ENCODE measurements at regions of chr4 and their contacts with region 1.

Region 1: GRCh38 chr4:173538148-173538908 is 8.3 kb upstream of the HAND2 start:
- DNase-seq: peak; percentile 61
- H3K4me3 Mint-ChIP-seq: peak overlapping the region; percentile 64
- H3K27ac Mint-ChIP-seq: no peak overlapping the region
- H3K4me1 Mint-ChIP-seq: peaks cover 2% of the 10 kb centered on the region
- H3K27me3 Mint-ChIP-seq: peaks cover 78% of the 10 kb centered on the region

Region 2: DNA sequence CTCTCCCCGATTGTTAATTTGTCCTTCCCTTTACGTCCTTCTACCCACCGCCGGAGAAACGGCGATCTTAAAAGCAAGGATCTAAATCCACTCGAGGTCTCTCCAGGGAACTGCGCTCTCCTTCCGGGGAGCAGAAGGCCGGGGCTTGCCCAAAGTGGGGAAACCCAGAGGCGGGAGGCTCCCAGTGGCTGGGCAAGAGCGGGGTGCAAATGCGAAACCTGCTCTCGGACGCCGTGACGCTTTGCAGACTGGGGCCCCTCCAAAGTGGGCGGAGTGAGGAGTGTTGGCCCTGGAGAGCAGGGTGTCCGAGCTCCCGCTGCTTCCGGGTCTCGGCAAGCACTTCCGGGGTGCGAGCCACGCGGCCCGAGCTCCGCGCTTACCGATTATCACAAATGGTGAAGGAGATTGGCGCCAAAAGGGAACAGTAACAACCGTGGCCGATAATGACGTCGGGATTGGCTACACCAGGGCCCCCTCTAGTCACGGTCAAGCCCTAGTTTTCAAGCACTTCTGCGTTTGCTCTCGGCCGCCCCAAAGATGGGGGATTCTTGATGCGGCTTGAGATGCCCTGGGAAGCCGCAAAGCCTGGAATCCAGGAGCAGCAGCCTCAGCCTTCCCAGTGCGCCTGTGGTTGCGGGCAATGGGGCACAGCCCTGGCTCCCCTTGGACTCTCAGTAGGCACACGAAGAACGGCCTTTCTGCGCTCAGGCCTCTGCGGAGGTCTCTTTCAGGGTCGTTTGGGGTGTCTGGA is 37.3 kb before region 1 on chr4:
- intact Hi-C with region 1: loop called (anchors 5 kb)
- DNase-seq: peak; percentile 58
- H3K4me3 Mint-ChIP-seq: peak overlapping the region; percentile 47
- H3K27ac Mint-ChIP-seq: no peak overlapping the region
- H3K4me1 Mint-ChIP-seq: no peaks in the 10 kb centered on the region
- H3K27me3 Mint-ChIP-seq: peaks cover 79% of the 10 kb centered on the region

Region 3: GRCh38 chr4:173522123-173522950 is 16.0 kb before region 1 on chr4:
- intact Hi-C with region 1: loop called (anchors 2 kb)
- DNase-seq: peak; percentile 58
- H3K4me3 Mint-ChIP-seq: peak overlapping the region; percentile 28
- H3K27ac Mint-ChIP-seq: peak overlapping the region; percentile 56
- H3K4me1 Mint-ChIP-seq: peaks cover 7% of the 10 kb centered on the region
- H3K27me3 Mint-ChIP-seq: peaks cover 88% of the 10 kb centered on the region

Measured in activated CD4-positive, alpha-beta T cell treated with anti-CD3 and anti-CD28 coated beads, Interleukin-2, amount 10 ng/mL, durations not matched to agents 24 days and 14 days (primary cell).